ENCODE measurements at regions of chr20 and their contacts with region 1.

Region 1: DNA sequence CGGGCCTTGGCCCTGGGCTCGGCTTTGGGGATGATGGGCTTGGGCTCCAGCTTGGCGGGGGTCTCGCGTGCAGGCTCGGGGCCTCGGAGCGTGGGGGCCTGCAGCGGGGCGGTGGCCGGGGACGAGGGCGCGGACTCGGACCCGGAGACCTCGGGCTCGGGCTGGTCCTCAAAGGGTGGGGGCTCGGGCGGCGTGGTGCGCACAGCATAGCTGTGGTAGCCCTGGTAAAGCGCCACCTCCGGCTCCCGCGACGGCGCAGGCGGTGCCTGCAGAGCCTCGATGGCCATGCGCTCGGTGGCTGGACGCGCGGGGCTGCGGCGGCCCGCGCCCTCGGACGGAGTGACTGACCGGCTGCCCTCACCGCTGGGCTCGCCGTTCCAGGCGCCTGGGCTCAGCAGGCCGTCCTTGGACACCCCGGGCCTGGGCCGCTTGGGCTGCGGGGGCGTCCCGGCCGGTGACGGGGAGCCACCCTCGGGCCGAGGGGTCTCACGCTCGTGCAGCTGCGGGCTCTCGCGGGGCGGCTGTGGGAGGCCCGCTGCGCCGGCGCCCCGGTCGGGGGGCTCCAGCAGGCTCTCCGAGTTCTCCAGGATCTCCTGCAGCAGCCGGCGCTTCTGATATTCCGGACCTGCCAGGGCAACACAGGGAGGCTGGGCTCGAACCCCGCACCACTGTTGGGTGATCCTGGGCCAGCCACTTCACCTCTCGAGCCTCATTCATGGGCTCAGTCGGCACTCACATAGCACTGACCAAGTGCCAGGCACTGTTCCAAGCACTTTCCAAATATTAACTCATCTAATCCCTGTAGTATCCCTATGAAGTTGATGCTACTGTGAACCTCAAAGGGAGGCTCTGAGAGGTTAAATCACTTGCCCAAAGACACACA is 71.0 kb downstream of the JPH2 start:
- DNase-seq: no peak
- H3K4me3 ChIP-seq: peak overlapping the region; percentile 12 to 31
- H3K27ac ChIP-seq: no peak overlapping the region
- H3K4me1 ChIP-seq: no peaks in the 10 kb centered on the region
- H3K27me3 ChIP-seq: no peaks in the 10 kb centered on the region
- CTCF ChIP-seq: no peak
- POLR2A ChIP-seq: no peak

Region 2: GRCh38 chr20:43529457-43530153 is 586.4 kb before region 1 on chr20:
- intact Hi-C with region 1: no loop called
- DNase-seq: no peak
- H3K4me3 ChIP-seq: no peak overlapping the region
- H3K27ac ChIP-seq: no peak overlapping the region
- H3K4me1 ChIP-seq: no peaks in the 10 kb centered on the region
- H3K27me3 ChIP-seq: no peaks in the 10 kb centered on the region
- CTCF ChIP-seq: no peak
- POLR2A ChIP-seq: no peak

Region 3: DNA sequence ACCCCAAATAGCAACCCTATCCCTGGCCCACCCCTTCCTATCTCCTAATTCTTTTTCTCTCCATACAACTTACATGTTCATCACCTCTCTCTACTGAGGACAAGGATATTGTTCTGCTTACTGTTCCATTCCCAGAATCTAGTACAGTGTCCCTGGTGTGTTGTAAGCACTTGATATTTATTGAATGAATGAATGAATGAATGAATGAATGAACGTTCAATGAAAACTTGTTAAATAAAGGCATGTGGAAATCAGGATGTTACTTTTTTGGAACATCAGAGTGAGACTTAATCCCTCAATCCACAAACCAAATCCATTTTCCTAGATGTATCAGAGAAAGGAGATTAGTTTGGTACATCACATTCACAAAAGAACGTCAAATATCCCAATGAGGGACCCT is 77.8 kb after region 1 on chr20:
- intact Hi-C with region 1: loop called (anchors 5 kb)
- DNase-seq: no peak
- H3K4me3 ChIP-seq: no peak overlapping the region
- H3K27ac ChIP-seq: no peak overlapping the region
- H3K4me1 ChIP-seq: no peaks in the 10 kb centered on the region
- H3K27me3 ChIP-seq: no peaks in the 10 kb centered on the region
- CTCF ChIP-seq: no peak
- POLR2A ChIP-seq: no peak